ENCODE measurements at regions of chr14 and their contacts with region 1.

Region 1: DNA sequence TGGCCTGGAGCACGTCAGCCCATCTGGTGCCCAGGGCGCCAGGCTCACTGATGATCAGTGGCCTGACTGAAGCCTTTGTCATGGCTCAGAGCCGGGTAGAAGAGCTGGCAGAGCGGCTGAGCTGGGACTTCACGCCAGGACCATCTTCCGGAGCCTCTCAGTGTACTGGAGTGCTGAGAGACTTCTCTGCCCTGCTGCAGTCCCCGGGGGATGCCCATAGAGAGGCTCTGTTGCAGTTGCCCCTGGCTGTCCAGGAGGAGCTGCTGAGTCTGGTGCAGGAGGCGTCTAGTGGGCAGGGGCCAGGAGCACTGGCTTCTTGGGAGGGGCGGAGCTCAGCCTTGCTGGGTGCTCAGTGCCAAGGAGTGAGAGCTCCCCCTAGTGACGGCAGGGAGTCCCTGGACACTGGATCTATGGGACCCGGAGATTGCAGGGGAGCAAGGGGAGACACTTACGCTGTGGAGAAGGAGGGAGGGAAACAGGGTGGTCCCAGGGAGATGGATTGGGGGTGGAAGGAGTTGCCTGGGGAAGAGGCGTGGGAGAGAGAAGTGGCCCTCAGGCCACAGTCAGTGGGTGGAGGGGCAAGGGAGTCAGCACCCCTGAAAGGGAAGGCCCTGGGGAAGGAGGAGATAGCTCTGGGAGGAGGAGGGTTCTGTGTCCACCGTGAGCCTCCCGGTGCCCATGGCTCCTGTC is 2.0 kb downstream of the KHNYN start:
- DNase-seq: peak; percentile 92
- ATAC-seq: peak; percentile 73
- H3K4me3 ChIP-seq: peak overlapping the region; percentile 93 to 95; a peak in 3 of 4 replicates
- H3K27ac ChIP-seq: peak overlapping the region; percentile 92
- H3K4me1 ChIP-seq: peaks cover 14 to 33% of the 10 kb centered on the region in 2 experiments
- H3K27me3 ChIP-seq: no peaks in the 10 kb centered on the region
- CTCF ChIP-seq: peak; percentile 96 to 99 (median 97)
- POLR2A ChIP-seq: no peak
- RAD21 ChIP-seq: peak; percentile 96

Region 2: GRCh38 chr14:24013654-24014514 is 417.8 kb before region 1 on chr14:
- CTCF ChIA-PET with region 1: no interaction called
- POLR2A ChIA-PET with region 1: no interaction called
- RAD21 ChIA-PET with region 1: no interaction called
- intact Hi-C with region 1: loop called (anchors 2 kb)
- DNase-seq: peak; percentile 78
- ATAC-seq: peak; percentile 99
- H3K4me3 ChIP-seq: no peak overlapping the region
- H3K27ac ChIP-seq: no peak overlapping the region
- H3K4me1 ChIP-seq: peaks cover 0 to 4% of the 10 kb centered on the region in 2 experiments; a peak in 1 of 4 replicates
- H3K27me3 ChIP-seq: no peaks in the 10 kb centered on the region
- CTCF ChIP-seq: peak; percentile 86 to 90 (median 87)
- POLR2A ChIP-seq: no peak
- RAD21 ChIP-seq: peak; percentile 95

Region 3: GRCh38 chr14:24241829-24242443 is 189.8 kb before region 1 on chr14:
- CTCF ChIA-PET with region 1: interaction called, 13 read pairs
- POLR2A ChIA-PET with region 1: interaction called, 7 read pairs
- RAD21 ChIA-PET with region 1: no interaction called
- intact Hi-C with region 1: loop called (anchors 2 kb)
- DNase-seq: peak; percentile 86
- ATAC-seq: peak; percentile 90
- H3K4me3 ChIP-seq: peak overlapping the region; percentile 72 to 75
- H3K27ac ChIP-seq: peak overlapping the region; percentile 99
- H3K4me1 ChIP-seq: peaks cover 11 to 40% of the 10 kb centered on the region in 2 experiments
- H3K27me3 ChIP-seq: no peaks in the 10 kb centered on the region
- CTCF ChIP-seq: peak in 1 of 3 experiments; percentile 57; a peak in 2 of 6 replicates
- POLR2A ChIP-seq: no peak
- RAD21 ChIP-seq: no peak

Region 4: DNA sequence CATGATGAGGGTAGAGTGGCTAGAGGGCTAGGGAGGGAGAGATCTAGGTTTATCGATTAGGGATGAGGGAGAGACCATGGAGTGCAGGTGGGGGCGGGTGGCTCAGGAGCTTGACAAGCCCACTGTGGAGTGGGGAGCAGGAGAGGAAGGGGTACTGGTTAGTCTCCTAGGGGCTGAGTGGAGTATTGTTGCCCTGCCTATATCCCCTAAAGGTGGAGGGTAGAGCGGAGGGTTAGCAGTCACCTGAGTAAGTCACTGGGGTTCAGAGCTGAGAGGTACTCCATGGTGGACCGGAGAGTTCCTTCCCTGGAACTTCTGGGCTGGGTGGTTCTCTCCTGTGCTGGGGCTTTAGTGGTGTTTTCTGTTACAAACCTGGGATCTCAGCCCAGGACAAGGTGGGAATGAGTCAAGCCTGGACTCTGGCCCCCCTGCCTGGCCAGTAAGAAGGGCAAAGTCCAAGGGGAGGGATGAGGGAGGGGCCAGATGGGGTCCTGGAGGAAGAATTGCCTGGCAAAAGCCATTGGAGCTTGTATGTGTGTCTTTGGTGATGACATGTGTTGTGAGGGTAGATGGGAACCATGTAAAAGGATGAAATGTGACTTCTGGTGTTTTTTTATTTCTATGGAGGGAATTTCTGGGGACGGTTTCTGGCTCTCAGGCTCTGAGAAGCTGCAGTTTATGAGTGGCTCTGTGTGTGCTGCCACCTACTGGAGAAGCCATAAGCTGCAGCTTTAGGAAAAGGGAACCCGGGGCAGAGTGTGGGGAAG is 124.0 kb before region 1 on chr14 and contains the start of gene CIDEB:
- CTCF ChIA-PET with region 1: interaction called, 22 read pairs
- POLR2A ChIA-PET with region 1: interaction called, 4 read pairs
- RAD21 ChIA-PET with region 1: interaction called in 1 of 2 experiments, 3 read pairs
- intact Hi-C with region 1: no loop called
- DNase-seq: no peak
- ATAC-seq: peak; percentile 88
- H3K4me3 ChIP-seq: no peak within 1 kb of the TSS
- H3K27ac ChIP-seq: peak within 1 kb of the TSS; percentile 20
- H3K4me1 ChIP-seq: peaks cover 7 to 16% of the 10 kb centered on the region in 2 experiments
- H3K27me3 ChIP-seq: no peaks in the 10 kb centered on the region
- CTCF ChIP-seq: peak; percentile 69 to 98 (median 97); a peak in 5 of 6 replicates
- POLR2A ChIP-seq: no peak
- RAD21 ChIP-seq: peak; percentile 57
- total RNA-seq, gene CIDEB: 0.22 TPM

Region 5: DNA sequence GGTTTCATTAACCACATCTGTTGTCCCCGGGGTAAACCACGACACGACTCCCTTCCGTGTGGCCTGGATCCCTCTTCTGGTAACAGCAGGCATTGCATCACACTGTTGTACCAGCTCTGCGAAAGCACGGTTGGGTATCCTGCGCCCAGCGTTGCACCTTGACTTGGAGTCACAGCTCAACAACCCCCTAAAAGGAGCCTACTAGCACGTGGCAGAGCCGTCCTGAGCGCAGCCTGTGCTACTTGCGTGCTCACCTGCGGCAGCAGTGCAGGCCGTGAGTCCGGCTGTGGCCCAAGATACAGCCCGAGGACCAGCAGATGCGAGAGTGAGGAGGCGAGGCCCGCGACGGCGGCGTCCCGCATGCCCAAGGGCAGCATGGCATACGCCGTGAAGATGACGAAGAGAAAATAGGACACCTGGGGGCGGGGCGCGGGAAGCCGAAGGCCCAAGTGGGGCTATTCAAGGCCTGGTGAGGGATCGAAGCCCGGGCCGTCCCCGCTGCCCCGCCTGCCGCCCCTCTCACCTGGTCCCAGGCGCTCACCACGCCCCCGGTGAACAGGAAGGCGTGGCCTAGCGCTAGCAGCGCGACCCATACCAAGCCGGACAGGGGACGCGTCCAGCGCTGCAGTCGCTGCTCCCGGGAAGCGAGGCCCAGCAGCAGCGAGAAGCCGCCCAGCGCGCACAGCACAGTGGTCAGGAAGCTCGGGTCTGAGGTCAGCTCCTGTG is 99.3 kb before region 1 on chr14:
- CTCF ChIA-PET with region 1: interaction called, 162 read pairs
- POLR2A ChIA-PET with region 1: interaction called, 38 read pairs
- RAD21 ChIA-PET with region 1: interaction called, 21 to 25 read pairs
- intact Hi-C with region 1: loop called (anchors 1 kb)
- DNase-seq: no peak
- ATAC-seq: peak; percentile 58
- H3K4me3 ChIP-seq: no peak overlapping the region
- H3K27ac ChIP-seq: no peak overlapping the region
- H3K4me1 ChIP-seq: peaks cover 4 to 12% of the 10 kb centered on the region in 2 experiments
- H3K27me3 ChIP-seq: no peaks in the 10 kb centered on the region
- CTCF ChIP-seq: peak; percentile 23 to 67 (median 61); a peak in 4 of 6 replicates
- POLR2A ChIP-seq: no peak
- RAD21 ChIP-seq: peak; percentile 46; the same call in 1 of the 2 replicates

Region 6: GRCh38 chr14:24442273-24443052 is 10.7 kb after region 1 on chr14 and contains the start of gene SDR39U1:
- CTCF ChIA-PET with region 1: interaction called, 42 read pairs
- POLR2A ChIA-PET with region 1: interaction called, 31 read pairs
- RAD21 ChIA-PET with region 1: interaction called in 1 of 2 experiments, 3 read pairs
- intact Hi-C with region 1: no loop called
- DNase-seq: peak; percentile 97
- ATAC-seq: peak; percentile 88
- H3K4me3 ChIP-seq: peak within 1 kb of the TSS; percentile 76 to 94
- H3K27ac ChIP-seq: peak within 1 kb of the TSS; percentile 96
- H3K4me1 ChIP-seq: peaks cover 5 to 17% of the 10 kb centered on the region in 2 experiments; a peak in 3 of 4 replicates
- H3K27me3 ChIP-seq: no peaks in the 10 kb centered on the region
- CTCF ChIP-seq: no peak
- POLR2A ChIP-seq: peak; percentile 88
- RAD21 ChIP-seq: no peak
- total RNA-seq, gene SDR39U1: 61.8 TPM

Measured in HCT116 (cell line).